Cardiac septum (tissue), 1 donor: ENCODE measurements at regions of chr2 and their contacts with region 1.

Region 1: DNA sequence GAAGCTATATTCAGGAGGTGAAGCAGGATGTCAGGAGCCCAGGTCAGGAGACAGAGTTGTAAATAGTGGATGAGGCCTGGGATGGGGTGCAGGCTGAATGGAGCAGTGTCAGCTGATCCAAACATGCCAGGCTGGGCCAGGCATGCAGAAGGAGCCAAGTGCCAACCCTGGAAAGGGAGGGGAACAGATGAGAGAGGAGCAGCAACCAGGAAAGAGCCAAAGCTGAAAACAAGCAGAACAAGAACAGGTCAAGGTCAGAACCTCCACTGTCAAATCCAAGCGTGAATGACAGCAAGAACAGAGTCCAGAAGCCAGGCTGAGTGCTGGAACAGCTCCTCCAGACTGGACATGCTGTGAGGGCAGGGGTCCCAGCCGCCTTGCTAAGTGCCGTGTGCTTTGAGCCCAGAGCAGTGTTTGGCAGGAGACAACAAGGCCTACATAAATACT is 49.2 kb upstream of the PPP1CB start:
- DNase-seq: peak; percentile 83

Region 2: GRCh38 chr2:28606986-28607441 is 95.4 kb before region 1 on chr2:
- intact Hi-C with region 1: loop called (anchors 5 kb)
- DNase-seq: no peak

Region 3: DNA sequence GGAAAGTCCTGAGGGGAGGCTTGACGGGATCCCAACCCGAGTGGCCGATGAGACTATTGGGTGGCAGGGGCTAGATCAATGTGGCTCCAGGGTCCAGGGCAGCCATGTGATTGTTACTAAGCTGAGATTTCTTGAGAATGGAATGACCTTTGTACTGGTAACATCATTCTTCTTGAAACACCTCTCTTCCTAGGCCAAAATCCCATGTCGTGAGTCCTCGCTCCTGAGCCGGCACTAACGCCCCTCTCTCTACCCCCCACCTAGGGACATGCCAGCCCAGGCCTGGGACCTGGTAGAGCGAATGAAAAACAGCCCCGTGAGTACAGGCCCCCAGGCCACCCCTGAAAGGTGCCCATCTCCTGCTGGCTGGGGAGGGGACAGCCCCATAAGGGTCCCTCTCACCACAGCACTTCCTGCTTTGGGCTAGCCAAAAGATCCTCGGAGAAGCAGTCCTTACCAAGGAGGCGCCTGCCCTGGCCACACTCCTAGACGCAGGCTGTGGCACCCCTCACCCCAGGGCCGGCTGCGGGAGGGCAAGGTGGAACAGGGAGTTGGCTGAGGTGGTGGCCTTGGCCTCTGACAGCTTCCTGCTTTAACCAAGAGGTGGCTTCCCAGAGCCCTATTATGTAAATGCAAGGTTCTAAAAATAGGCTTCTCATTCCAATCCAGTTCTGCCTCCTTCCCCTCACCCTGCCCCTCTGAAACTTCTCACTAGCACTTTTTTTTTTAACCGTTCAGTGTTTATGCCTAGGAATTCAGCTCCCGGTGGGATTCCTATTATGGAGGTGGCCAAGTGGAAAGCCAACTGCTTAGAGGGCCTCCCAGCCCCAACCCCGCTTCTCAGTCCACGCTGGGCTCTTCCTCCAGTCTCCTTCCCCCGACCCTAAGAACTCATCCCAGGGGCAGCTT is 77.4 kb before region 1 on chr2:
- intact Hi-C with region 1: loop called (anchors 2 kb)
- DNase-seq: no peak

Region 4: DNA sequence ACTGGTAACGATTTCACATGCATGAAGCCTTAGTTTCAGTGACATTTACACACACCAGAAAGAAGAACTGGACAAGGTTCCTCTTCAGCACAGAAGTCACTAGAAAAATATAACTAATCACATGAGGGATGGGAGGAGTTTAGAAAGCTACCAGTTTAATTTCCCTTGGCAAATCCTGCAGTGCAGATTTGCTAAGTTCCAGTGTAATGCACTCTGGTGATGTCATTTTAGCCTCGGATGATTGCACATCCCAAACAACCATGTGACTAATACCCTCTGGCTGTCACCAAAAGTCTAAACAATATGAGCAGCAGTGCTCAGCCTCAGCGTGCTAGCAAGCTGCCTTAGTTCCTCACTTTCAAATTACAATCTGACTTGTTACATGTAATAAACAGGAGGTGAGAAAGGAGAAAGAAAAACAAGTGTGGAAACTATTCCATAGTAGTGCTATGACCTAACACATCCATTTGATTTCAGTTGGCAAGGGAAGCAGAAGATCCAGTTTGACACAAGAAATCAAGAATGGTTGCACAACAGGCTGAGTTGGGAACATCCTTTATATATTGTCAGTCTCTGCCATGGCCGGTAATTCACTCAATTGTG is 13.9 kb after region 1 on chr2:
- intact Hi-C with region 1: loop called (anchors 2 kb)
- DNase-seq: no peak

Region 5: GRCh38 chr2:29033172-29033571 is 330.7 kb after region 1 on chr2:
- intact Hi-C with region 1: no loop called
- DNase-seq: no peak